ENCODE measurements at regions of chr6 and their contacts with region 1.

Region 1: GRCh38 chr6:41846666-41847237 is 48.4 kb downstream of the USP49 start:
- DNase-seq: peak; percentile 69
- H3K4me3 ChIP-seq: no peak overlapping the region
- H3K27ac ChIP-seq: peak overlapping the region; percentile 2 to 48 (median 34)
- H3K4me1 ChIP-seq: peaks cover 0 to 10% (median 6%) of the 10 kb centered on the region in 4 donors
- H3K27me3 ChIP-seq: no peaks in the 10 kb centered on the region
- CTCF ChIP-seq: peak; percentile 69 to 79 (median 79)
- EP300 ChIP-seq: no peak
- POLR2A ChIP-seq: no peak

Region 2: GRCh38 chr6:42030585-42031506 is 184.1 kb after region 1 on chr6:
- in situ Hi-C with region 1: loop called in 2 of 4 experiments (anchors 10 to 25 kb)
- intact Hi-C with region 1: no loop called
- DNase-seq: no peak
- H3K4me3 ChIP-seq: no peak overlapping the region
- H3K27ac ChIP-seq: no peak overlapping the region
- H3K4me1 ChIP-seq: peaks cover 0 to 12% (median 9%) of the 10 kb centered on the region in 4 donors
- H3K27me3 ChIP-seq: no peaks in the 10 kb centered on the region
- CTCF ChIP-seq: no peak
- EP300 ChIP-seq: no peak
- POLR2A ChIP-seq: no peak

Measured in transverse colon (tissue), 4 donors.